ENCODE measurements at regions of chr2 and their contacts with region 1.

Region 1: GRCh38 chr2:105114551-105114950 is 76.7 kb downstream of the MRPS9 start:
- DNase-seq: no peak
- ATAC-seq: peak in 2 of 4 donors; percentile 41 to 62
- H3K4me3 ChIP-seq: no peak overlapping the region
- H3K27ac ChIP-seq: no peak overlapping the region
- H3K4me1 ChIP-seq: no peaks in the 10 kb centered on the region
- H3K27me3 ChIP-seq: peaks cover 0 to 4% (median 0%) of the 10 kb centered on the region in 9 donors
- CTCF ChIP-seq: peak; percentile 56 to 82 (median 74)
- POLR2A ChIP-seq: no peak

Region 2: GRCh38 chr2:105129722-105130232 is 15.2 kb after region 1 on chr2:
- intact Hi-C with region 1: loop called in 1 of 10 experiments (anchors 2 kb)
- DNase-seq: no peak
- ATAC-seq: no peak
- H3K4me3 ChIP-seq: no peak overlapping the region
- H3K27ac ChIP-seq: no peak overlapping the region
- H3K4me1 ChIP-seq: no peaks in the 10 kb centered on the region
- H3K27me3 ChIP-seq: peaks cover 0 to 13% (median 0%) of the 10 kb centered on the region in 9 donors
- CTCF ChIP-seq: no peak
- POLR2A ChIP-seq: no peak

Region 3: DNA sequence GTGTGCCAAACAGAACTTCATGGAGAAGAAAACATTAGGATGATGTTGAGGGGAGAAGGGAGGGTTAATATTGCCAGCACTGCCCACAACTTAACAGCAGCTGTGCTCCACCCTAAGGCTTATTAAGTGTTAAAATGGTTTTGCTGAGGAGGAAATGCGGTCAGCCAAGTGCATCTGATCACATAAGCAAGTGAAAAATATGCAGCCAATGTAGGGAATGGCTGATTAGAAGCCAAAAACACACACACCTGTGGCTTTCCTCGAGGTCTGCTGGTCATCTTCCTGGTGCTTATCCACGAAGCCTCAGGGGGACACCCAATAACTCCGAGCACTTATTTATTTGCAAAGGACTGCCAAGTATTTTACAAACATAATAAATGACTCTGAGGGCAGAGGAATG is 60.7 kb after region 1 on chr2:
- intact Hi-C with region 1: no loop called
- DNase-seq: no peak
- ATAC-seq: no peak
- H3K4me3 ChIP-seq: no peak overlapping the region
- H3K27ac ChIP-seq: no peak overlapping the region
- H3K4me1 ChIP-seq: peaks cover 0 to 5% (median 0%) of the 10 kb centered on the region in 12 donors
- H3K27me3 ChIP-seq: peaks cover 0 to 38% (median 10%) of the 10 kb centered on the region in 9 donors
- CTCF ChIP-seq: no peak
- POLR2A ChIP-seq: no peak

Region 4: GRCh38 chr2:105235388-105236054 is 121.0 kb after region 1 on chr2:
- intact Hi-C with region 1: loop called (anchors 1 to 2 kb)
- DNase-seq: peak; percentile 40 to 82 (median 62)
- ATAC-seq: peak; percentile 51 to 76 (median 67)
- H3K4me3 ChIP-seq: no peak overlapping the region
- H3K27ac ChIP-seq: no peak overlapping the region
- H3K4me1 ChIP-seq: peaks cover 0 to 10% (median 0%) of the 10 kb centered on the region in 12 donors
- H3K27me3 ChIP-seq: peaks cover 0 to 7% (median 0%) of the 10 kb centered on the region in 9 donors
- CTCF ChIP-seq: peak; percentile 60 to 78 (median 66)
- POLR2A ChIP-seq: no peak

Region 5: GRCh38 chr2:105294844-105295481 is 180.4 kb after region 1 on chr2:
- intact Hi-C with region 1: loop called in 3 of 10 experiments (anchors 2 to 10 kb)
- DNase-seq: peak in 3 of 5 donors; percentile 23 to 45 (median 25)
- ATAC-seq: peak in 3 of 4 donors; percentile 58 to 76 (median 63)
- H3K4me3 ChIP-seq: no peak overlapping the region
- H3K27ac ChIP-seq: no peak overlapping the region
- H3K4me1 ChIP-seq: peaks cover 0 to 6% (median 0%) of the 10 kb centered on the region in 12 donors
- H3K27me3 ChIP-seq: no peaks in the 10 kb centered on the region
- CTCF ChIP-seq: peak; percentile 15 to 59 (median 40)
- POLR2A ChIP-seq: no peak

Region 6: DNA sequence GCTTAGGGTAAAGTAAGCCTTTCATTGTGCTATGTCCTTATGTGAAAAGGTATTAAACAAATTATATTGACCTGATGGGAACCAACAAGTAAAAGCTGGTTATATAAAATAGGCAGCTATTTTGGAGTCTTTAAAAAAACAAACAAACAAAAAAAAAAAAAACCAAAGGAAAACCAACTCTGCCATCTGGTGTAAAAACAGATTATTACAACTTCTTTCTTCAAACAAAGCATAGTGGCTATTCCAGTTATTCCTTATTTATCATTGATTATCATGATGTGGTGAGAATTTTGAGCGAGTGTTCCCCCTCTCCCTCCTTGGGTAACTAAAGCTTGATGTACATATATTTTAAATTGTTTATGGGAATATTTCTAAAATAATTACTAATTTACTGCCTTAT is 406.7 kb after region 1 on chr2:
- intact Hi-C with region 1: loop called in 1 of 10 experiments (anchors 10 kb)
- DNase-seq: no peak
- ATAC-seq: no peak
- H3K4me3 ChIP-seq: no peak overlapping the region
- H3K27ac ChIP-seq: peak overlapping the region in 6 of 12 donors; percentile 28 to 89 (median 42)
- H3K4me1 ChIP-seq: peaks cover 0 to 39% (median 19%) of the 10 kb centered on the region in 12 donors
- H3K27me3 ChIP-seq: no peaks in the 10 kb centered on the region
- CTCF ChIP-seq: peak; percentile 44 to 74 (median 64)
- POLR2A ChIP-seq: no peak

Region 7: GRCh38 chr2:105545730-105546627 is 431.4 kb after region 1 on chr2:
- intact Hi-C with region 1: loop called in 3 of 10 experiments (anchors 10 kb)
- DNase-seq: peak; percentile 60 to 74 (median 69)
- ATAC-seq: peak in 3 of 4 donors; percentile 62 to 77 (median 65)
- H3K4me3 ChIP-seq: no peak overlapping the region
- H3K27ac ChIP-seq: no peak overlapping the region
- H3K4me1 ChIP-seq: peaks cover 0 to 15% (median 1%) of the 10 kb centered on the region in 12 donors
- H3K27me3 ChIP-seq: peaks cover 0 to 3% (median 0%) of the 10 kb centered on the region in 9 donors
- CTCF ChIP-seq: peak; percentile 71 to 90 (median 81)
- POLR2A ChIP-seq: no peak